Sigmoid colon (tissue), 7 donors: ENCODE measurements at regions of chr16 and their contacts with region 1.

Region 1: GRCh38 chr16:10737068-10737625 is 6.5 kb upstream of the NUBP1 start:
- DNase-seq: no peak
- H3K4me3 ChIP-seq: no peak overlapping the region
- H3K27ac ChIP-seq: peak overlapping the region; percentile 64 to 90 (median 76)
- H3K4me1 ChIP-seq: peaks cover 0 to 29% (median 25%) of the 10 kb centered on the region in 4 donors
- H3K27me3 ChIP-seq: no peaks in the 10 kb centered on the region
- CTCF ChIP-seq: peak; percentile 79 to 94 (median 88)
- EP300 ChIP-seq: no peak
- POLR2A ChIP-seq: no peak

Region 2: DNA sequence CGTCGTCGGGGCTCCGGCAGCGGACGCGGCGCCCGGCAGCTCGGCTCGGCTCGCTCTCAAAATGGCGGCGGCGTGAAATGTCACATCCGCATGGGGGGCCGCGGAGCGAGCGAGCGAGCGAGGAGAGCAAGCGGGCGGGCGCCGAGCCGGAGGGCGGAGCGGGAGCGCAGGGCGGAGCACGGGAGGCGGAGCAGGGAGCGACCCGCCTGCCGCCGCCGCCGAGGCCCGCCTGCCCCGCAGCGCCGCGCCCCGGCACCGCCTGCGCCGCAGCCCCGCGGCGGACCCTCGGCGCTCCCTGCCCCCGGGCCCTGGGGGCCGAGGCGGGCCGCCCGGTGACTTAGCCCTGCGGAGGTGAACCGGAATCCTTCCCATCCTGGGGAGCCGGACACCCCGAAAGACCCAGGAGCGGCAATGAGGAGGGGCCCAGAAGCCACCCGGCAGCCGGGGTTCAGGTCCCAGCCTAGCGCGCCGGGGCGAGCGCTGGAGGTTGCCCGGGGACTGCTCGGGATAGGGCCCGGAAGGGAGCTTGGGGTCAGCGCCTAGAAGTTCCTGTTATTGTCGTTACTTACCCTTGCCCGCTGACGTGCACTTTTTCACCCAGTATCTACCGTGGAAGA is 1773.2 kb before region 1 on chr16 and contains the start of gene USP7:
- intact Hi-C with region 1: loop called (anchors 5 kb)
- DNase-seq: peak; percentile 95
- H3K4me3 ChIP-seq: peak within 1 kb of the TSS; percentile 57 to 91 (median 72)
- H3K27ac ChIP-seq: peak within 1 kb of the TSS; percentile 81 to 89 (median 88)
- H3K4me1 ChIP-seq: peaks cover 0 to 44% (median 41%) of the 10 kb centered on the region in 4 donors
- H3K27me3 ChIP-seq: no peaks in the 10 kb centered on the region
- CTCF ChIP-seq: no peak
- EP300 ChIP-seq: no peak
- POLR2A ChIP-seq: no peak
- total RNA-seq, gene USP7: 64.9 to 84.5 (median 80.5) TPM

Region 3: GRCh38 chr16:10256784-10257641 is 480.1 kb before region 1 on chr16:
- intact Hi-C with region 1: loop called (anchors 5 kb)
- DNase-seq: no peak
- H3K4me3 ChIP-seq: no peak overlapping the region
- H3K27ac ChIP-seq: no peak overlapping the region
- H3K4me1 ChIP-seq: peaks cover 0 to 6% (median 0%) of the 10 kb centered on the region in 4 donors
- H3K27me3 ChIP-seq: peaks cover 0 to 23% (median 0%) of the 10 kb centered on the region in 3 donors
- CTCF ChIP-seq: peak; percentile 35 to 81 (median 52)
- EP300 ChIP-seq: no peak
- POLR2A ChIP-seq: no peak

Region 4: GRCh38 chr16:10314811-10315210 is 422.3 kb before region 1 on chr16:
- intact Hi-C with region 1: loop called (anchors 10 kb)
- DNase-seq: no peak
- H3K4me3 ChIP-seq: no peak overlapping the region
- H3K27ac ChIP-seq: no peak overlapping the region
- H3K4me1 ChIP-seq: no peaks in the 10 kb centered on the region
- H3K27me3 ChIP-seq: no peaks in the 10 kb centered on the region
- CTCF ChIP-seq: no peak
- EP300 ChIP-seq: no peak
- POLR2A ChIP-seq: no peak

Region 5: GRCh38 chr16:10579965-10580882 is 156.9 kb before region 1 on chr16 and contains the start of gene EMP2:
- intact Hi-C with region 1: loop called (anchors 2 kb)
- DNase-seq: peak; percentile 93
- H3K4me3 ChIP-seq: peak within 1 kb of the TSS; percentile 95 to 99 (median 98)
- H3K27ac ChIP-seq: peak within 1 kb of the TSS; percentile 98 to 99 (median 98)
- H3K4me1 ChIP-seq: peaks cover 0 to 56% (median 53%) of the 10 kb centered on the region in 4 donors
- H3K27me3 ChIP-seq: no peaks in the 10 kb centered on the region
- CTCF ChIP-seq: peak; percentile 37 to 60 (median 56)
- EP300 ChIP-seq: no peak
- POLR2A ChIP-seq: peak; percentile 37 to 75
- total RNA-seq, gene EMP2: 38.3 to 57.3 (median 42.8) TPM